ENCODE measurements at regions of chr11 and their contacts with region 1.

Region 1: DNA sequence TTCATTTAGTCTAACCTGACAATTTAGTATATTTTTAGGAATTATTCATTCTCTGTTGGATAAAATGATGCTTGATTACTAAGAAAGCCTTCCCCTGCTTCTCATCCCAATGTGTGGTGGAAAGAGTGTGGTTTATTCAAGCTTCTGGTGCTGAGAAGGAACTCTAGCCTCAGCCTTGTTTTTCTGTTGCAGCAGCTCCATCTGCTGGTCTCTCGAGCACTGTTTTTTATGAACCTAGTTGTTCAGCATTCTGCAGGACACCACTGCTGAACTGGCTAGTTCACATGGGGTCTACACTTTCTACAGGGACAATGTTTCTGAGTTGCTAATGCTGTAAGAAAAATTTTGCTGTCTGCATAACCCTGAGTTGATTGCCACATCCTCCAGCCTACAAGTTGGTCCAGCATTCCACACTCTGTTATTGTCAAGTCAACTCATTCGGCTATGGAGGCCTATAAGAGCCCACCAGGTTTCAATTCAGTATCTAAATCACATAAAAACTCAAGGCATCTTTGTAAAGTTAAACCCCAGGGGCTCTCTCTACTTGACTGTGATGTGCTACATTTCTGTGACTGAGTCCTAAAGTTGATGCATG is 14.3 kb downstream of the OR2AG2 start:
- DNase-seq: peak; percentile 82
- ATAC-seq: peak; percentile 84
- H3K4me3 Mint-ChIP-seq: no peak overlapping the region
- H3K27ac Mint-ChIP-seq: no peak overlapping the region
- H3K4me1 Mint-ChIP-seq: peaks cover 13% of the 10 kb centered on the region
- H3K27me3 Mint-ChIP-seq: peaks cover 5% of the 10 kb centered on the region
- CTCF ChIP-seq: peak; percentile 84

Region 2: GRCh38 chr11:6203327-6203726 is 554.1 kb before region 1 on chr11:
- CTCF ChIA-PET with region 1: no interaction called
- POLR2A ChIA-PET with region 1: no interaction called
- intact Hi-C with region 1: no loop called
- DNase-seq: peak; percentile 33
- ATAC-seq: peak; percentile 65
- H3K4me3 Mint-ChIP-seq: no peak overlapping the region
- H3K27ac Mint-ChIP-seq: no peak overlapping the region
- H3K4me1 Mint-ChIP-seq: peaks cover 34% of the 10 kb centered on the region
- H3K27me3 Mint-ChIP-seq: no peaks in the 10 kb centered on the region
- CTCF ChIP-seq: no peak

Region 3: GRCh38 chr11:6674862-6675261 is 82.6 kb before region 1 on chr11:
- CTCF ChIA-PET with region 1: no interaction called
- POLR2A ChIA-PET with region 1: no interaction called
- intact Hi-C with region 1: no loop called
- DNase-seq: no peak
- ATAC-seq: no peak
- H3K4me3 Mint-ChIP-seq: no peak overlapping the region
- H3K27ac Mint-ChIP-seq: no peak overlapping the region
- H3K4me1 Mint-ChIP-seq: peaks cover 50% of the 10 kb centered on the region
- H3K27me3 Mint-ChIP-seq: no peaks in the 10 kb centered on the region
- CTCF ChIP-seq: no peak

Region 4: GRCh38 chr11:6693342-6694228 is 63.9 kb before region 1 on chr11:
- CTCF ChIA-PET with region 1: interaction called, 24 read pairs
- POLR2A ChIA-PET with region 1: interaction called, 3 read pairs
- intact Hi-C with region 1: no loop called
- DNase-seq: peak; percentile 82
- ATAC-seq: peak; percentile 81
- H3K4me3 Mint-ChIP-seq: no peak overlapping the region
- H3K27ac Mint-ChIP-seq: peak overlapping the region; percentile 46
- H3K4me1 Mint-ChIP-seq: peaks cover 31% of the 10 kb centered on the region
- H3K27me3 Mint-ChIP-seq: no peaks in the 10 kb centered on the region
- CTCF ChIP-seq: no peak

Region 5: DNA sequence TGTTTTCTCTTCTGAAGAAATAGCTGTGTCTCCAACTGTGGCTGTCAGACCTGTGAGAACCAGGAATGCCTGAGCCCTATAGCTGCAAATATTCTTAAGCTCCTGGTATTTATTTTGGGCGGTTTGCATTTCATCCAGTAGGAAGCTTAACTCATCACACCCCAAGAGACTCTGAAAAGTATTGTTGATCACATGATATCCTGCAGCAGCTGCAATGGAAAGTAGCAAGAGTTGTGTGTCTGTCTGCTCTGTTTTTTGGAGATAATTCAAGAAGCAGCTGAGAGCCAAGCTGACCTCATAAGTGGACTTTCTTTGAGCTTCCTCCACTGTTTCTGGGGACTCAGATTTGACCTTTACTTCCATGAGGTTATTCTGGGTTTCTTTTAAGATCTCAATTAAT is 37.9 kb before region 1 on chr11:
- CTCF ChIA-PET with region 1: interaction called, 186 read pairs
- POLR2A ChIA-PET with region 1: no interaction called
- intact Hi-C with region 1: no loop called
- DNase-seq: no peak
- ATAC-seq: no peak
- H3K4me3 Mint-ChIP-seq: no peak overlapping the region
- H3K27ac Mint-ChIP-seq: peak overlapping the region; percentile 65
- H3K4me1 Mint-ChIP-seq: peaks cover 77% of the 10 kb centered on the region
- H3K27me3 Mint-ChIP-seq: no peaks in the 10 kb centered on the region
- CTCF ChIP-seq: no peak

Region 6: GRCh38 chr11:6727971-6728760 is 29.3 kb before region 1 on chr11:
- CTCF ChIA-PET with region 1: interaction called, 367 read pairs
- POLR2A ChIA-PET with region 1: interaction called, 3 read pairs
- intact Hi-C with region 1: no loop called
- DNase-seq: no peak
- ATAC-seq: no peak
- H3K4me3 Mint-ChIP-seq: no peak overlapping the region
- H3K27ac Mint-ChIP-seq: peak overlapping the region; percentile 74
- H3K4me1 Mint-ChIP-seq: peaks cover 71% of the 10 kb centered on the region
- H3K27me3 Mint-ChIP-seq: no peaks in the 10 kb centered on the region
- CTCF ChIP-seq: no peak

Region 7: DNA sequence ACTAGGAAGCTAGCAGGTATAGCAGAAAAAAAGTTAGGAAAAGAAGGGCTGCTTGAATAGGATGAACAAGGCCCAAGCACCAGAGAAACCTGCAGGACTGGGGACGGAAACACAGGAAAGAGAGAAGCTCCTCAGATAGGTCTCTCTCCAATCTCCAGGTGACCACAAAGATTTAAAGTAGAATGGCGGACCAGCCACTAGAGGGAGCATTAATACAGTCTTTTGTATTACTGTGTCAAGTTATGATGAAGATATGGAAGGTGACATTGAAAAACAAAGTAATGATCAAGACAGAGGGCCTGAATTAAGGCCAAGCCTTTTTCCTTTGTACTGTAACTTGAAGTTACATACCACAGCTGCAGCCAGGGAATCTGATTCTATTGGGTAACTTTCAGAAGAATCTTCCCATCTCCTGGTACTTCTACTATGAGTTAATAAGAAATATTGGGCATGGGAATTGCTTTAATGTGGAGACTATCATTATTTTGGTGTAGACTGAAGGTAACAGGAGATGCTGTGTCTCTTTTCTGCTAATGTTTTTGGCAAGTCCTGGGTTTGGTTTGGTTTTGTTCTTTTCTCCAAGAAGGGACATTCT is 19.5 kb before region 1 on chr11:
- CTCF ChIA-PET with region 1: interaction called, 367 read pairs
- POLR2A ChIA-PET with region 1: interaction called, 6 read pairs
- intact Hi-C with region 1: loop called (anchors 1 kb)
- DNase-seq: peak; percentile 86
- ATAC-seq: peak; percentile 57
- H3K4me3 Mint-ChIP-seq: no peak overlapping the region
- H3K27ac Mint-ChIP-seq: peak overlapping the region; percentile 78
- H3K4me1 Mint-ChIP-seq: peaks cover 84% of the 10 kb centered on the region
- H3K27me3 Mint-ChIP-seq: no peaks in the 10 kb centered on the region
- CTCF ChIP-seq: peak; percentile 72

Region 8: GRCh38 chr11:6771926-6772893 is 14.7 kb after region 1 on chr11 and contains the start of gene OR2AG2:
- CTCF ChIA-PET with region 1: interaction called, 10 read pairs
- POLR2A ChIA-PET with region 1: no interaction called
- intact Hi-C with region 1: no loop called
- DNase-seq: no peak
- ATAC-seq: no peak
- H3K4me3 Mint-ChIP-seq: no peak within 1 kb of the TSS
- H3K27ac Mint-ChIP-seq: no peak within 1 kb of the TSS
- H3K4me1 Mint-ChIP-seq: no peaks in the 10 kb centered on the region
- H3K27me3 Mint-ChIP-seq: peaks cover under 1% of the 10 kb centered on the region
- CTCF ChIP-seq: no peak
- total RNA-seq, gene OR2AG2: 0.29 to 0.45 TPM

Measured in activated CD8-positive, alpha-beta T cell treated with anti-CD3 and anti-CD28 coated beads for 36 hours (primary cell).